Right lobe of liver (tissue), 6 donors: ENCODE measurements at regions of chr1 and their contacts with region 1.

Region 1: GRCh38 chr1:52296345-52296744 is 69.7 kb downstream of the CC2D1B start:
- DNase-seq: no peak
- ATAC-seq: peak; percentile 93 to 96 (median 93)
- H3K4me3 ChIP-seq: no peak overlapping the region
- H3K27ac ChIP-seq: no peak overlapping the region
- H3K4me1 ChIP-seq: no peaks in the 10 kb centered on the region
- H3K27me3 ChIP-seq: no peaks in the 10 kb centered on the region
- CTCF ChIP-seq: peak; percentile 67 to 77 (median 75)
- POLR2A ChIP-seq: no peak

Region 2: DNA sequence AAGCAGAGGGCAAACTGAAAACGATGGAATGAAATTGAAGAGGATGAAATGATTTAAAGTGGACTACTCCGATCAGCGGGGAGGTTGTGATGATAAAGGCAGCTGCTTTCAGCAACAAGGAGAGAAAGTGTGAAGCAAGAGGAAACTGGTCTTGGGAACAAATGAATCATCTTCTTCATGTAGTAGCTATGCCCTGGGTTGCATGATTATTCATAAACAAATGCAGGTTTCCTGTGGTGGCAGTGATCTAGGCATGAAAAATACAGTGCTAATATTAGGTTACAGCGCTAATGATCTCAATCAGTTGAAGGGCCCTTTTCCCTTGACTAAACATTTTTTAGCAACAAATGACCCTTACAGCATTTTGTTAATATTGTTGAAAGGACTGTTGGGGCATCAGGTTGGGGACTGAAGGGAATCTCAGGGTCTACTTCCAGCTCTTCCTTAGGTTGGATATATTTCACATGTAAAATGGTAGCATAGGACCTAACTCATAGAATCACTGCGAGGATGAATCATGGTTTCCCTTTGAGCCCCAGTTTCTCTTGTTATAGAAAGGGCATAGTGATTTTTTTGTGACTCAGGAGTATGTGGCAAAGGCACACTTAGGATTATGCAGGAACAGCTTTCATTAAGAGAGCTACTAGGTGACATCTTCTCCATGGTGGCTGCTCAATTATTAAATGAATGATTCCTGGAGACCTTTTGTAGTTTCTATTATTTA is 156.4 kb before region 1 on chr1:
- intact Hi-C with region 1: loop called in 1 of 2 experiments (anchors 10 kb)
- DNase-seq: no peak
- ATAC-seq: no peak
- H3K4me3 ChIP-seq: no peak overlapping the region
- H3K27ac ChIP-seq: no peak overlapping the region
- H3K4me1 ChIP-seq: peaks cover 0 to 11% (median 4%) of the 10 kb centered on the region in 4 donors
- H3K27me3 ChIP-seq: no peaks in the 10 kb centered on the region
- CTCF ChIP-seq: no peak
- POLR2A ChIP-seq: no peak